Dendritic cell treated with granulocyte-macrophage colony-stimulating factor and Interleukin-4, amounts not matched to agents 40 ng/mL and 50 ng/mL, for 4 days (primary cell): ENCODE measurements at regions of chr6 and their contacts with region 1.

Region 1: GRCh38 chr6:129936329-129937165 is 75.4 kb upstream of the TMEM244 start:
- H3K4me3 Mint-ChIP-seq: no peak overlapping the region
- H3K27ac Mint-ChIP-seq: no peak overlapping the region
- H3K4me1 Mint-ChIP-seq: no peaks in the 10 kb centered on the region
- H3K27me3 Mint-ChIP-seq: peaks cover 13% of the 10 kb centered on the region

Region 2: GRCh38 chr6:129893640-129894039 is 42.9 kb before region 1 on chr6:
- intact Hi-C with region 1: loop called (anchors 1 kb)
- H3K4me3 Mint-ChIP-seq: no peak overlapping the region
- H3K27ac Mint-ChIP-seq: no peak overlapping the region
- H3K4me1 Mint-ChIP-seq: peaks cover 35% of the 10 kb centered on the region
- H3K27me3 Mint-ChIP-seq: peaks cover 2% of the 10 kb centered on the region